ENCODE measurements at regions of chr7 and their contacts with region 1.

Region 1: DNA sequence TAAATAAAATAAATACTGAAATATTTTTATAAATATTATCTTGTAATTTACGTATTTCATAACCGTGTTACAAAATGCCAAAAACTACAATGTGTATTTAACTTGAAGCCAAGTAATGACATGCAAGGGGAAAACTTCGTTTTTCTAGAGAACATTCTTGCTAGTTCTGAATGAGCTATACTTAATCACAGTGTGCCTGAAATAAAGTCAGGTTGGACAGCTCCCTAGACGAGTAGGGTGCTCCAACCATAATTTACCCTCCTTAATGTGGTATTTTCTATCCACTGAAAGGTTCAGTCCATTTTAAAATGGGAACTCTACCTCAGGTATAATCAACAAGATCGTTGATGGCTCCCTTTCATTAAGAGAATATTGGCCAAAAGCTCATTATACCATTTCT is 194.5 kb upstream of the AHR start:
- DNase-seq: no peak
- ATAC-seq: no peak
- H3K4me3 Mint-ChIP-seq: no peak overlapping the region
- H3K27ac Mint-ChIP-seq: no peak overlapping the region
- H3K4me1 Mint-ChIP-seq: peaks cover 2% of the 10 kb centered on the region
- H3K27me3 Mint-ChIP-seq: no peaks in the 10 kb centered on the region

Region 2: GRCh38 chr7:16668049-16668858 is 435.7 kb before region 1 on chr7:
- CTCF ChIA-PET with region 1: no interaction called
- POLR2A ChIA-PET with region 1: no interaction called
- intact Hi-C with region 1: no loop called
- DNase-seq: no peak
- ATAC-seq: no peak
- H3K4me3 Mint-ChIP-seq: no peak overlapping the region
- H3K27ac Mint-ChIP-seq: no peak overlapping the region
- H3K4me1 Mint-ChIP-seq: peaks cover 17% of the 10 kb centered on the region
- H3K27me3 Mint-ChIP-seq: no peaks in the 10 kb centered on the region

Region 3: GRCh38 chr7:17054206-17054605 is 49.8 kb before region 1 on chr7:
- CTCF ChIA-PET with region 1: no interaction called
- POLR2A ChIA-PET with region 1: no interaction called
- intact Hi-C with region 1: loop called in 1 of 2 experiments (anchors 5 kb)
- DNase-seq: no peak
- ATAC-seq: no peak
- H3K4me3 Mint-ChIP-seq: no peak overlapping the region
- H3K27ac Mint-ChIP-seq: no peak overlapping the region
- H3K4me1 Mint-ChIP-seq: peaks cover 3% of the 10 kb centered on the region
- H3K27me3 Mint-ChIP-seq: no peaks in the 10 kb centered on the region

Region 4: DNA sequence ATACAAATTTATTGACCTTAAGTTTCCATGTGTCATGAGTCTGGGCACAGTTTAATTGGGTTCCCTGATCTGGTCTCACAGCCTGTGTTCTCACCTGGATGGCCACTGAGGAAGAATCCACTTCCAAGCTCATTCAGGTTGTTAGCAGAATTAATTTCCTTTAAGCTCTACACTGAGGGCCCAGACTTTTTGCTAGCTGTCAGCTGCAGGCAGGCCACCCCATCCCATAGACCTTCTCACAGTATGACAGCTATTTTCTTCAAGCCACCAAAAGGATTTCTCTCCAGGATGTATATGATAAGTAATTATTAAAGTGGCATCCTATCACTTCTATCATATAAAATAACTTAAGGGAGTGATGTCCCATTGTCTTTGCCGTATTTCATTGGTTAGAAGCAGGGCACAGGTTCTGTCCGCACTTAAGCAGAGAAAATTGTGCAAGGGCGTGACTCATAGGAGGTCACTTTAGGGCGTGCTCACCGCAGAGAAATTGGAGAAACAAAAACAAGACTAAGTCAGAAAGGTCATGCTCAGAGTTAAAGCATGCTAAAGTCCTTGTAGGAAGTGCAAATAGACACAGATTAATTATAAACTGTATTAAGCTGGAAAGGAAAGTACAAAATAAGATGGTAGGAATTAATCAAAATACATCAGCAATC is 304.4 kb after region 1 on chr7:
- CTCF ChIA-PET with region 1: no interaction called
- POLR2A ChIA-PET with region 1: no interaction called
- intact Hi-C with region 1: no loop called
- DNase-seq: no peak
- ATAC-seq: no peak
- H3K4me3 Mint-ChIP-seq: no peak overlapping the region
- H3K27ac Mint-ChIP-seq: no peak overlapping the region
- H3K4me1 Mint-ChIP-seq: peaks cover 2% of the 10 kb centered on the region
- H3K27me3 Mint-ChIP-seq: peaks cover 3% of the 10 kb centered on the region

Measured in activated CD4-positive, alpha-beta T cell treated with anti-CD3 and anti-CD28 coated beads for 36 hours (primary cell).